ENCODE measurements at regions of chr19 and their contacts with region 1.

Region 1: DNA sequence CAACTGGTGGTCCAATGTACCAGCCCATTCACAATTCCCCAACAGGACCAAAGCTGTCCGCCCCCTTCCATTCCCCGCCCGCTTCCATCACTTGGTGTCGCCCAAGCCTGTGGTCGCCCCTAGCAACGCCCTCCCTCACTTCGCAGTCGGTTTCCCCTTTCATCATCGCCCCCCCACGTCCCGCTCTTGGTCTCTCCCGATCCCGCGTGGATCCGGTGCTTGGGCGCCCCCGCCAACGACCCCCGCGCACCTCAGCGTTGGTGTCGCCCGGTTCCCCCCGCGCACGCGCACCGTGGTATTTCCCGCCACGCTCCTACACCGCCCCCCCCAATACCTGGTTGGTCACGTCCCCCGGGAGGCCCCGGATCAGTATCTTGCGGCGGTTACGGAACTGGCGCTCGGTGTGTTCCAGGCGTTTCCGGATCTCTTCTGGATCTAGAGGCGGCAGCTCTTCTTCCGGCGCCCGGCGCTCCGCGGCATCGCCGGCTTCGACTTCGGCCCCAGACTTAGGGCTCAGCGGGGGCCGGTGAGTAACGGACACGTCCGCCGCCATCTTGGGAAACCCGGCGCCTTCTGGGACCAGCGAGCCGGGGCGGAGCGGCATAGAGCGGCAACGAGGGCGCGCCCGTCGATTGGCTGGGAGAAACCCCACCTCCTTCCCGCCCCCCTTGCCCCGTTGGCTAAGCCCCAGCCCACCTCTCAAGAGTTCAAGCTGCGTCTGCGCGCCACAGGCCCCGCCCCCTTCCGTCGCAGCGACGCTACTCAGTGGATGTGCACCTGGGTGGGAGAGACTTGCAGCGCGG is at the start of gene RAVER1:
- DNase-seq: peak; percentile 99
- H3K4me3 Mint-ChIP-seq: peak within 1 kb of the TSS; percentile 96
- H3K27ac Mint-ChIP-seq: peak within 1 kb of the TSS; percentile 96
- H3K4me1 Mint-ChIP-seq: peaks cover 21% of the 10 kb centered on the region
- H3K27me3 Mint-ChIP-seq: no peaks in the 10 kb centered on the region
- total RNA-seq, gene RAVER1: 96.1 and 108 TPM in 2 replicates

Region 2: DNA sequence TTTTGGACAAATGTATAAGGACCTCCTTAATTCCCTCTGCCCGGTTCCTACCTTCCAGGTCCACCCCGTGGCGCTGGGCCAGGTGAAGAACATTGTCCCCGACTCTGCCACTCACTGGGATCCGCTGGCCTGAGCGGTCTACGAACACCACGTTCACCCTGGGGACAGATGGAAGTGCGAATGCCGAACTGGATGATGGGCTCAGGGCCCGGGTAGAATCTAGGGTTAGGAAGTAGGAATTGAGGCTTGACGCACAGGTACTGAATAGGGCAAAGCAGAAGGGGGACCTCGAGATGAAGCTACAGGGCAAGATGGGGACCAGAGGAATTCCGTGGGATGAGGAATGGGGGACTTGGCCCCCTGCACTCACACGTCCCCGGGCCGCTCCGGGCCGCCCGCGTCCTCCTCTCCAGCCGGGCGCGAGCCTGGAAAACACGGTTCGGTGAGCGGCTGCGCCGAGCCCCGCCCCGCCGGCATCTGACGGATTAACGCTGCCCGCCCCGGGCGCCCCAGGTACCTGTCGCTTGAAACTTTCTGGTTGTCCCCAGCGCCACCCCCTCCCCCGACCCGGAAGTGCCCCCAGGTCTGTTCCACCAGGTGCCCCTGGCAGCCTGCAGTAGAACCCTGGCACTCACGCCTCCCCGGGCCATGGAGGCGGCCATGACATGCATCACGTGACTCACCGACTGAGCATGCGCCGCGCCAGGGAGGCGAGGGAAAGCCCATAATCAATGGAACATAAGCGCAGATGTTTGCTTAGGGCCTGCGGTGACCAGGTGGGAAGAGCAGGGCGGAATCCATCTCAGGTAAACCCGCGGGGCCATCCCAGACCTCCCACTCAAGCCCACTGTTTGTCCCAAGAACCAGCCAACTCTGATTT is 17.6 kb before region 1 on chr19 and contains the start of gene FDX2:
- intact Hi-C with region 1: no loop called
- DNase-seq: peak; percentile 97
- H3K4me3 Mint-ChIP-seq: peak within 1 kb of the TSS; percentile 86
- H3K27ac Mint-ChIP-seq: peak within 1 kb of the TSS; percentile 83
- H3K4me1 Mint-ChIP-seq: peaks cover 14% of the 10 kb centered on the region
- H3K27me3 Mint-ChIP-seq: no peaks in the 10 kb centered on the region
- total RNA-seq, gene FDX2: 23.9 and 24.9 TPM in 2 replicates

Region 3: DNA sequence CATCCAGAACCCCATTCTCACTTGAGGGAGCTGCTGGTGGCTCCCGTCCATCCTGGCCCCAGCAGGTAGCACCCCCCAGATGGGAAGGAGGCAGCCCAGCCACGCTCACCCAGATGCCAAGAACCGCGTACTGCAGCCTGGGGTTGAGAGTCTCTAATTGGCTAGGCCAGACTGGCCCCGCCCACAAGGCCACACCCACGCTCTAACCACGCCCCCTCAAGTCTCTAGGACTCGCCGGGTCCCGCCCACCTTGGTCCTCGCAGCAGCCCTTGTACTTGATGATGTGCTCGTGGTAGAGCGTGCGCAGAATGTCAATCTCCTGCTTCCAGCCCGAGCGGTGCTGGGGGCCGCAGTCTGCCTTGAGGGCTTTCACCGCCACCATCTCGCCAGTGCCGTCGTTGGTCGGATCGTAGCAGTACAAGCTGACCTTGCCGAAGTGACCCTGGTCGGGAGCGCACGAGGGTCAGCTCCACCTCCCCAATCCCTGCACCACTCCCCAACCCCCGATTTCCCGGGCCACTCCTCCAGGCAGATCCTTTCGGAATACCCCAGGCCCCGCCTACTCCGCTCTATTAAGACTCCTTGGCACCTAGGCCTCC is 20.7 kb after region 1 on chr19:
- intact Hi-C with region 1: no loop called
- DNase-seq: peak; percentile 81
- H3K4me3 Mint-ChIP-seq: no peak overlapping the region
- H3K27ac Mint-ChIP-seq: no peak overlapping the region
- H3K4me1 Mint-ChIP-seq: no peaks in the 10 kb centered on the region
- H3K27me3 Mint-ChIP-seq: no peaks in the 10 kb centered on the region

Region 4: GRCh38 chr19:10380313-10381102 is 47.4 kb after region 1 on chr19 and contains the start of gene TYK2:
- intact Hi-C with region 1: loop called (anchors 2 kb)
- DNase-seq: peak; percentile 99
- H3K4me3 Mint-ChIP-seq: peak within 1 kb of the TSS; percentile 92
- H3K27ac Mint-ChIP-seq: peak within 1 kb of the TSS; percentile 91
- H3K4me1 Mint-ChIP-seq: peaks cover 20% of the 10 kb centered on the region
- H3K27me3 Mint-ChIP-seq: peaks cover 1% of the 10 kb centered on the region
- total RNA-seq, gene TYK2: 244 and 255 TPM in 2 replicates

Region 5: DNA sequence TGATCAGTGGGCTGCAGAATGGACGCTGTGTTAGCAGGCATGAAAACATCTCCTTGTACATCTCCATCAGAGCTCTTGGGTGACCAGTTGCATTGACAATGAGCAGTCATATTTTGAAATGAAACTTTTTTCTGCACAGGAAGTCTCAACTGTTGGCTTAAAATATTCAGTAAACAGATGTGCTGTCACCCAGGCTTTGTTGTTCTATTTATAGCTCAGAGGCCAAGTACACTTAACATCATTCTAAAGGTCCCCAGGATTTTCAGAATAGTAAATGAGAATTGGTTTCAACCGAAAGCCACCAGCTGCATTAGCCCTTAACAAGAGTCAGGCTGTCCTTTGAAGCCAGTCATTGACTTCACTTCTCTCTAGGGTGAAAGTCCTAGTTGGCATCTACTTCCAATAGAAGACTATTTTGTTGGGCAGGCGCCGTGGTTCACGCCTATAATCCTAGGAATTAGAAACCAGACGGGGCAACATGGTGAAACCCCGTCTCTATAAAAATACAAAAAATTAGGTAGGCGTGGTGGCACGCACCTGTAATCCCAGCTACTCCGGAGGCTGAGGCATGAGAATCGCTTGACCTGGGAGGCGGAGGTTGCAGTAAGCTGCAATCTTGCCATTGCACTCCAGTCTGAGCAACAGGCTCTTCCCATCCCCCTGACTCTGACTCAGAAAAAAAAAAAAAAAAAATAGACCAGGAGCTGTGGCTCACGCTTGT is 79.3 kb after region 1 on chr19:
- intact Hi-C with region 1: no loop called
- DNase-seq: peak; percentile 86
- H3K4me3 Mint-ChIP-seq: peak overlapping the region; percentile 69
- H3K27ac Mint-ChIP-seq: peak overlapping the region; percentile 90
- H3K4me1 Mint-ChIP-seq: peaks cover 70% of the 10 kb centered on the region
- H3K27me3 Mint-ChIP-seq: no peaks in the 10 kb centered on the region

Measured in activated CD4-positive, alpha-beta T cell treated with anti-CD3 and anti-CD28 coated beads, Interleukin-2, amount 10 ng/mL, durations not matched to agents 24 days and 14 days (primary cell).